IMR-90 (cell line): ENCODE measurements at regions of chr22 and their contacts with region 1.

Region 1: GRCh38 chr22:36470162-36470993 is 11.1 kb downstream of the TXN2 start:
- DNase-seq: peak; percentile 89
- ATAC-seq: peak; percentile 42
- H3K4me3 ChIP-seq: no peak overlapping the region
- H3K27ac ChIP-seq: peak overlapping the region; percentile 97
- H3K4me1 ChIP-seq: peaks cover 44% of the 10 kb centered on the region
- H3K27me3 ChIP-seq: no peaks in the 10 kb centered on the region
- CTCF ChIP-seq: peak; percentile 95
- POLR2A ChIP-seq: peak; percentile 68
- RAD21 ChIP-seq: peak; percentile 99

Region 2: DNA sequence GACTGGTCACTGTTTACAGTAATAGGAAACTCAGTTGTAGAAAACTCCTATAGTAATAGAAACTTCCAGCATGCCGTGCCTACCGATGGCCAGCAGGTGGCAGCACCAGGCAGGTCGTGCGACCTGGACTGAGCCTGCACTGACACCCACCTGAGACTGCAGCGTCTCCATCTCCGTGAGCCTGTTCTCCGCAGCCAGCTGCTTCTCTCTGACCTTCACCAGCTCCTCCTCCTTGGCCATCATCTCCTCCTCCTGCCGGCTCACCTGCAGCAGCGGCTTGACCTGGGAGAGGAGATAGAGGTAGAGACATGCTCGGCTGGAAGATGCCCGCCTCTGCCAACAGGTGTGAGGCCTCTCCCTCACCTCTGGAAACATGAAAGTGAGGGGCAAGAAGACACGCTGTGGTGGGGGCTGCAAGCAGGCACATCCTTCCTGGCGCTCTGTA is 169.0 kb before region 1 on chr22:
- CTCF ChIA-PET with region 1: interaction called, 17 read pairs
- POLR2A ChIA-PET with region 1: no interaction called
- dilution Hi-C with region 1: no loop called
- in situ Hi-C with region 1: no loop called
- intact Hi-C with region 1: loop called (anchors 1 kb)
- DNase-seq: peak; percentile 73
- ATAC-seq: peak; percentile 43
- H3K4me3 ChIP-seq: no peak overlapping the region
- H3K27ac ChIP-seq: peak overlapping the region; percentile 94
- H3K4me1 ChIP-seq: peaks cover 21% of the 10 kb centered on the region
- H3K27me3 ChIP-seq: no peaks in the 10 kb centered on the region
- CTCF ChIP-seq: peak; percentile 75
- POLR2A ChIP-seq: peak; percentile 46
- RAD21 ChIP-seq: peak; percentile 69

Region 3: DNA sequence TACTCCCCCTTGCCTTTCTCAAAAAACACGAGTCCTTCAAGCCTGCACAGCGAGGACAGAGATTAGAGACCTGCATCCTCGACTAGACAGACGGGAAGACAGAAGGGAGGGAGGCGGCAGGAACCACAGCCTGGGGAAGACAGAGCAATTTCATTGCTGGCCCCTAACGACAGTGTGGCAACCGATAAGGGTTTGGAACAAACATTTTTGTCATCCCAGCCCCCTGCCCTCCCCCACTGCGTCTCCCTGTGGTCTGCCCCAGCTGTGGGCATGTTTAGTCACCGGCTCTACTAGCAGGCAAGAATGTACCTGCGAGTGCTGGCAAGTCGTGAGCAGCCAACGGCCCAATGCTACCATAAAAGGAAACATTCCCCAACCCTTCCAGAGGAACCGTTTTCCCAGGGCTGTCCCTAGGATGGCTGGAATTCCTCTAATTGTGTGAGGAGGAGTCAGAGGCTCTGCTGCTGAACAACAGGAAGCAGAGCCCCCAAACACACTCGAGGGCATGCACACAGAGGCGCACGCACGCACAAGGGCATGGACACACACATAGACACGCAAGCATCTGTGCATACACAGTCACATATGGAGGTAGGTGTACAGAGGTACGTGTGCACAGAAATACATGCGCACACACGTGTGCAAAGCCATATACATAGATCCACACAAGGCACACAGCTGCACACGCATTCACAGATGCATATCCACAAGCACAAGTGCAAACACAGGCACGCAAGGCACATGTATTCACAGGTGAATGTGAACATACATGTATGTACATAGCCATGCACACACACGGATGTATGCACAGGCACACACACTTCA is 140.9 kb before region 1 on chr22:
- CTCF ChIA-PET with region 1: interaction called, 7 read pairs
- POLR2A ChIA-PET with region 1: interaction called, 6 read pairs
- dilution Hi-C with region 1: no loop called
- in situ Hi-C with region 1: no loop called
- intact Hi-C with region 1: loop called (anchors 1 kb)
- DNase-seq: peak; percentile 97
- ATAC-seq: peak; percentile 50
- H3K4me3 ChIP-seq: no peak overlapping the region
- H3K27ac ChIP-seq: peak overlapping the region; percentile 87
- H3K4me1 ChIP-seq: peaks cover 77% of the 10 kb centered on the region
- H3K27me3 ChIP-seq: no peaks in the 10 kb centered on the region
- CTCF ChIP-seq: no peak
- POLR2A ChIP-seq: peak; percentile 14; the same call in 1 of the 2 replicates
- RAD21 ChIP-seq: peak; percentile 22

Region 4: GRCh38 chr22:36365020-36365411 is 105.4 kb before region 1 on chr22:
- CTCF ChIA-PET with region 1: interaction called, 5 read pairs
- POLR2A ChIA-PET with region 1: no interaction called
- dilution Hi-C with region 1: no loop called
- in situ Hi-C with region 1: no loop called
- intact Hi-C with region 1: loop called (anchors 5 kb)
- DNase-seq: peak; percentile 99
- ATAC-seq: peak; percentile 42
- H3K4me3 ChIP-seq: no peak overlapping the region
- H3K27ac ChIP-seq: peak overlapping the region; percentile 92
- H3K4me1 ChIP-seq: peaks cover 72% of the 10 kb centered on the region
- H3K27me3 ChIP-seq: no peaks in the 10 kb centered on the region
- CTCF ChIP-seq: no peak
- POLR2A ChIP-seq: peak; percentile 63; the same call in 1 of the 2 replicates
- RAD21 ChIP-seq: no peak

Region 5: DNA sequence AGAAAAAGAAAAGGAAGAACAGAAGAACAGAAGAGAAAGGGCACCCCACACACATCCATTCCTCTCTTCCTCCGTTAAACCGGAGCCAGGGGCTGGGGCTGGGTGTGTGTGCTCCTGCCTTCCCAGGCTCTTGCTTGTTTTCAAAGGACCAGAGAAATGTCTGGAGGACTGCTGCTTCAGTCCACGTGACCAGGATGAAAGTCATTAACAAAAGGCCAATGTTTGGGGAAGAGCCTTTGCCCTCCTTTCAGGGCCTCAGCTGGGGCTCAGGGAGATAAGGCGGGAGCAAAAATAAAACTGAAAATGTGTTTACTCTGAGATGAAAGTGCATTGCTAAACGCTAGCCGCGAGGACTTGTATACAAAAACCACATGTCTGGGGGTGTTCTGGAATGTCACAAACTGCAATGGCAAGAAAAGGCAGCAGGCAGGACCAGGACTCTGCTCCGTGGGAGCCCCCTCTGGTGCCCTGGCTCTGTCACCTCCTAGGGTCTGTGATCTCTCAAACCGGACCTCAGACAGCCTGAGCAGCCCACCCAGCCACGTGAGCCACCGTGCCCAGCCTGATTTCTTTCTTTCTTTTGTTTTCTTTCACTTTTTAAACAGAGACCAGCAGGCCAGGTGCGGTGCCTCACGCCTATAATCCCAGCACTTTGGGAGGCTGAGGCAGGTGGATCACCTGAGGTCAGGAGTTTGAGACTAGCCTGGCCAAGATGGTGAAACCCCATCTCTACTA is 51.0 kb before region 1 on chr22:
- CTCF ChIA-PET with region 1: no interaction called
- POLR2A ChIA-PET with region 1: interaction called, 12 read pairs
- dilution Hi-C with region 1: no loop called
- in situ Hi-C with region 1: no loop called
- intact Hi-C with region 1: loop called (anchors 5 kb)
- DNase-seq: peak; percentile 96
- ATAC-seq: peak; percentile 86
- H3K4me3 ChIP-seq: no peak overlapping the region
- H3K27ac ChIP-seq: peak overlapping the region; percentile 90
- H3K4me1 ChIP-seq: peaks cover 28% of the 10 kb centered on the region
- H3K27me3 ChIP-seq: no peaks in the 10 kb centered on the region
- CTCF ChIP-seq: 0 out of 2 replicates have a peak, but pooled peaks have one; percentile 2
- POLR2A ChIP-seq: no peak
- RAD21 ChIP-seq: no peak; the same call in 1 of the 2 replicates